ENCODE measurements at regions of chr22 and their contacts with region 1.

Region 1: GRCh38 chr22:30968924-30969539 is at the start of gene TUG1:
- DNase-seq: peak; percentile 94 to 99 (median 97)
- ATAC-seq: peak; percentile 93
- H3K4me3 ChIP-seq: peak within 1 kb of the TSS; percentile 69 to 81
- H3K4me3 Mint-ChIP-seq: peak within 1 kb of the TSS; percentile 97
- H3K27ac ChIP-seq: peak within 1 kb of the TSS; percentile 75 to 91
- H3K27ac Mint-ChIP-seq: peak within 1 kb of the TSS; percentile 98
- H3K4me1 ChIP-seq: peaks cover 21% of the 10 kb centered on the region
- H3K4me1 Mint-ChIP-seq: peaks cover 51% of the 10 kb centered on the region
- H3K27me3 ChIP-seq: no peaks in the 10 kb centered on the region
- H3K27me3 Mint-ChIP-seq: no peaks in the 10 kb centered on the region
- CTCF ChIP-seq: no peak
- total RNA-seq, gene TUG1: 74.9 to 79.0 TPM

Region 2: DNA sequence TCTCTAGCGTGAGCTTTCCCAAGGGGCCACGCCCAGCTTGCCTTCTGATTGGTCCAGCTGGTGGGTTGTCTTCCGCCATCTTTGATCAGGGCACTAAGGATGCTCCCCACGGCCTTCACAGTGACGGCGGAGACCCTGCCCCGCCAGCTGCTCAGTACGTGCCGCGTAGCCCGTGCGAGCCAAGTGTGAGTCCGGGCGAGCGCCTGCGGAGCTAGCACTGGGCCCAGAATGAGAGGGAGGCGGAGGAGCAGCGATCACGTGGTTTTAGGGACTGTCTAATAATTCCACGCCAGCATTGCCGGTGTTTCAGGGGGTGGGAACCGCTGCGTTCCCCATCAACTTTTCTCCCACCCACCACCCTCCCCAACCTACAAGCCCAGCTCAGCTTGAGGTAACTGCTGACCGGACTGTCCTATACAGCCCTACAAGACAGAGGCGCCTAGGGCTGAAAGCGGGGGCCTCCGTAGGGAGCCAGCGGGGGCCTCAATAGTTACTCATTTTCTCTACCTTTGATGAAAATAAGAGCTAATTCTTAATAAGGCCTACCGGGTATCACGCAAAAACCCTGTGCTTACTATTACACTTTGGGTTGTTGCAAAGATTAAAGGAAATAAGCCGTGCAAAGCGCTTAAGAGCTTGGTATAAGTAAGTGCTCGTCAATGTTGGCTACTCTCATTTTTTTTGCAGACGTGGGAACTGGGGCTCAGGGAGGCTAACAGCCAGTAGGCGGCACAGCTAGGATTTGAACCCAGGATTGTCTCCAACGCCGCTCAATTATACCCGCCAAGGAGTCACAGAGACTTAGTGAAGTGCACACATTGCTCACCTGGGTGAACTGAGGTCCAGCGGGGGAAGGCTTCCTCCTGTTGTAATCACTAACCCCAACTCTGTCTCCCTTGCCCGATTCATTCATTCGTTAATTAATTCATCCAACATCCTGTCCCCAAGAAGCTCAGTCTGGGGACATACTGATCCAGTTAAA is 544.8 kb before region 1 on chr22:
- CTCF ChIA-PET with region 1: no interaction called
- POLR2A ChIA-PET with region 1: no interaction called
- intact Hi-C with region 1: loop called in 1 of 2 experiments (anchors 10 kb)
- DNase-seq: peak; percentile 94 to 100 (median 98)
- ATAC-seq: peak; percentile 76
- H3K4me3 ChIP-seq: peak overlapping the region; percentile 64 to 69
- H3K4me3 Mint-ChIP-seq: peak overlapping the region; percentile 93
- H3K27ac ChIP-seq: peak overlapping the region; percentile 89 to 91
- H3K27ac Mint-ChIP-seq: peak overlapping the region; percentile 97
- H3K4me1 ChIP-seq: peaks cover 41% of the 10 kb centered on the region
- H3K4me1 Mint-ChIP-seq: peaks cover 63% of the 10 kb centered on the region
- H3K27me3 ChIP-seq: no peaks in the 10 kb centered on the region
- H3K27me3 Mint-ChIP-seq: no peaks in the 10 kb centered on the region
- CTCF ChIP-seq: no peak

Region 3: DNA sequence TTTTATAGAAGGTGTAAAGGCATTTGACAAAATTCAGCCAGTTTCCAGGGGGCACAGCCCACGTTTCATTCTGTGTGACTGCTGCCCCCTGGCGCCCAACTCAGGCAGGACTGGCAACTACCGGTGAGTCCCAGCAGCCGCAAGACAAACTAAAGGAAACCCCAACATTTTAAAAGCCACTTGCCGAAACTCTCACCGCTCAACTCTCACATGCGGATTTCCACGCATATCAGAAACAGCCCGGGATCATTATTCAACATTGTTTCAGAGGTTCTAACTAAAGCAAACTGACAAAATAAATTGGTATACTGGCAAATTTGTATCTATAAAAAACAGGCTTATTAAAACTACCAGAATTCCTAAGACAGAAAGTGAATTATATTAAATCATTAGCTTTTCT is 48.6 kb before region 1 on chr22:
- CTCF ChIA-PET with region 1: interaction called, 12 read pairs
- POLR2A ChIA-PET with region 1: interaction called, 31 read pairs
- intact Hi-C with region 1: loop called (anchors 1 kb)
- DNase-seq: peak; percentile 66 to 91 (median 86)
- ATAC-seq: peak; percentile 77
- H3K4me3 ChIP-seq: no peak overlapping the region
- H3K4me3 Mint-ChIP-seq: peak overlapping the region; percentile 64
- H3K27ac ChIP-seq: no peak overlapping the region
- H3K27ac Mint-ChIP-seq: peak overlapping the region; percentile 55
- H3K4me1 ChIP-seq: peaks cover 26% of the 10 kb centered on the region
- H3K4me1 Mint-ChIP-seq: peaks cover 31% of the 10 kb centered on the region
- H3K27me3 ChIP-seq: no peaks in the 10 kb centered on the region
- H3K27me3 Mint-ChIP-seq: no peaks in the 10 kb centered on the region
- CTCF ChIP-seq: peak; percentile 96

Region 4: GRCh38 chr22:30955153-30955552 is 13.9 kb before region 1 on chr22:
- CTCF ChIA-PET with region 1: interaction called, 3 read pairs
- POLR2A ChIA-PET with region 1: interaction called, 15 read pairs
- intact Hi-C with region 1: no loop called
- DNase-seq: no peak
- ATAC-seq: no peak
- H3K4me3 ChIP-seq: no peak overlapping the region
- H3K4me3 Mint-ChIP-seq: peak overlapping the region; percentile 45
- H3K27ac ChIP-seq: peak overlapping the region in 1 of 2 experiments; percentile 47
- H3K27ac Mint-ChIP-seq: peak overlapping the region; percentile 89
- H3K4me1 ChIP-seq: peaks cover 66% of the 10 kb centered on the region
- H3K4me1 Mint-ChIP-seq: peaks cover 77% of the 10 kb centered on the region
- H3K27me3 ChIP-seq: no peaks in the 10 kb centered on the region
- H3K27me3 Mint-ChIP-seq: no peaks in the 10 kb centered on the region
- CTCF ChIP-seq: no peak

Region 5: GRCh38 chr22:31160328-31160978 is 191.4 kb after region 1 on chr22:
- CTCF ChIA-PET with region 1: no interaction called
- POLR2A ChIA-PET with region 1: interaction called, 4 read pairs
- intact Hi-C with region 1: loop called in 1 of 2 experiments (anchors 1 kb)
- DNase-seq: peak in 6 of 9 experiments; percentile 11 to 55 (median 28)
- ATAC-seq: peak; percentile 34
- H3K4me3 ChIP-seq: peak overlapping the region; percentile 78 to 86
- H3K4me3 Mint-ChIP-seq: peak overlapping the region; percentile 100
- H3K27ac ChIP-seq: peak overlapping the region; percentile 72 to 90
- H3K27ac Mint-ChIP-seq: peak overlapping the region; percentile 98
- H3K4me1 ChIP-seq: peaks cover 26% of the 10 kb centered on the region
- H3K4me1 Mint-ChIP-seq: peaks cover 38% of the 10 kb centered on the region
- H3K27me3 ChIP-seq: no peaks in the 10 kb centered on the region
- H3K27me3 Mint-ChIP-seq: no peaks in the 10 kb centered on the region
- CTCF ChIP-seq: no peak

Region 6: GRCh38 chr22:31345331-31346254 is 376.6 kb after region 1 on chr22:
- CTCF ChIA-PET with region 1: no interaction called
- POLR2A ChIA-PET with region 1: no interaction called
- intact Hi-C with region 1: loop called in 1 of 2 experiments (anchors 1 kb)
- DNase-seq: peak; percentile 78 to 97 (median 90)
- ATAC-seq: peak; percentile 77
- H3K4me3 ChIP-seq: peak overlapping the region; percentile 63 to 72
- H3K4me3 Mint-ChIP-seq: peak overlapping the region; percentile 90
- H3K27ac ChIP-seq: peak overlapping the region; percentile 51 to 70
- H3K27ac Mint-ChIP-seq: peak overlapping the region; percentile 93
- H3K4me1 ChIP-seq: peaks cover 52% of the 10 kb centered on the region
- H3K4me1 Mint-ChIP-seq: peaks cover 52% of the 10 kb centered on the region
- H3K27me3 ChIP-seq: no peaks in the 10 kb centered on the region
- H3K27me3 Mint-ChIP-seq: no peaks in the 10 kb centered on the region
- CTCF ChIP-seq: peak; percentile 82

Region 7: GRCh38 chr22:32411829-32412592 is 1443.0 kb after region 1 on chr22 and contains the start of gene RTCB:
- CTCF ChIA-PET with region 1: no interaction called
- POLR2A ChIA-PET with region 1: no interaction called
- intact Hi-C with region 1: loop called in 1 of 2 experiments (anchors 10 kb)
- DNase-seq: peak; percentile 88 to 96 (median 92)
- ATAC-seq: peak; percentile 88
- H3K4me3 ChIP-seq: peak within 1 kb of the TSS; percentile 82 to 94
- H3K4me3 Mint-ChIP-seq: peak within 1 kb of the TSS; percentile 98
- H3K27ac ChIP-seq: peak within 1 kb of the TSS; percentile 56 to 72
- H3K27ac Mint-ChIP-seq: peak within 1 kb of the TSS; percentile 96
- H3K4me1 ChIP-seq: peaks cover 22% of the 10 kb centered on the region
- H3K4me1 Mint-ChIP-seq: peaks cover 50% of the 10 kb centered on the region
- H3K27me3 ChIP-seq: peaks cover 0 to 2% of the 10 kb centered on the region in 2 experiments
- H3K27me3 Mint-ChIP-seq: peaks cover 3% of the 10 kb centered on the region
- CTCF ChIP-seq: no peak
- total RNA-seq, gene RTCB: 42.8 to 46.5 TPM